Prostate gland (tissue), 2 donors: ENCODE measurements at regions of chr22 and their contacts with region 1.

Region 1: GRCh38 chr22:41403532-41404318 is 22.0 kb downstream of the TEF start:
- DNase-seq: peak; percentile 85
- H3K4me3 ChIP-seq: no peak overlapping the region
- H3K27ac ChIP-seq: no peak overlapping the region
- H3K4me1 ChIP-seq: peaks cover 4% of the 10 kb centered on the region
- H3K27me3 ChIP-seq: no peaks in the 10 kb centered on the region
- CTCF ChIP-seq: peak; percentile 93 to 98 (median 98)
- POLR2A ChIP-seq: no peak

Region 2: GRCh38 chr22:41468381-41469217 is 64.9 kb after region 1 on chr22 and contains the starts of genes ACO2 and PHF5A:
- intact Hi-C with region 1: loop called (anchors 10 kb)
- DNase-seq: peak; percentile 97
- H3K4me3 ChIP-seq: peak within 1 kb of the TSS; percentile 96 to 97
- H3K27ac ChIP-seq: peak within 1 kb of the TSS; percentile 87 to 93
- H3K4me1 ChIP-seq: peaks cover 9% of the 10 kb centered on the region
- H3K27me3 ChIP-seq: no peaks in the 10 kb centered on the region
- CTCF ChIP-seq: peak in 2 of 4 experiments; percentile 21 to 26
- POLR2A ChIP-seq: peak; percentile 69
- total RNA-seq, gene ACO2: 100 to 177 TPM
- total RNA-seq, gene PHF5A: 35.8 to 40.2 TPM

Region 3: DNA sequence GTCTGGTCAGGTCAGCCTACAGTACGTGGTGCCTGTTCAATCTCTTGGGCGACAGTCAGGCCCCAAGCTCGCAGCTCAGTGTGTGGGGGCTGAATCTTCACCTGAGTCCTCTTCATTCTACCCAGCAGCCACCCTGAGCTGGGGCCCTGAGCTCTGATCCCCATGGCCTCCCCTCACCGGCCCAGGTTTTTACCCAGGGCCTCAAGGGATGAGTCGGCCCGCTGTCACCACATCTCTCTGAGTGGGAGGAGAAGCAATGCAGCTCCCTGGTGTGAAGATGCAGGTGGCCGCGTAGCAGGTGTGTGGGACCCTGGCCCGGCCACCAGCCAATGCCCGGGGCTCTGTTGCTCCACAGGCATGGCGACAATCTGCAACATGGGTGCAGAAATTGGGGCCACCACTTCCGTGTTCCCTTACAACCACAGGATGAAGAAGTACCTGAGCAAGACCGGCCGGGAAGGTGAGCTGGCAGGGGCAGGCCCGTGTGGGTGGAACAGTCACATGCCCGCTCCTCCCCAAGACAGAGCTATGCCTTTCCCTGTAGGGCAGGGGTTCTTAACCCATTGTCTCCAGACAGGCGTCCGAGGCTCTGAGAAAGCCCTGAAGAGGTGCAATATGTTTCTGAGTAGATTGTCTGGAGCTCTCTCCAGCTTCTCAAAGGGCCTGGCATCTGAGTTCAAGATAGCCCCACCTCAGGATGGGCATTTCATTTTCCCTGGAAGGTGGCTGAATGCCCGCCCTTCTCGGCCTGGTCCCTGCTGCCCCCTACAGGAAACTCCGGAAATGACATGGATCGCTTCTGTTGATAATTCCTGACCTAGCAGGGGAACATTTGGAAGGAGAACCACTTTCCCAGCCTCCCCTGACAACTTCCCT is 113.7 kb after region 1 on chr22:
- intact Hi-C with region 1: loop called (anchors 2 kb)
- DNase-seq: peak; percentile 61
- H3K4me3 ChIP-seq: no peak overlapping the region
- H3K27ac ChIP-seq: no peak overlapping the region
- H3K4me1 ChIP-seq: peaks cover 4% of the 10 kb centered on the region
- H3K27me3 ChIP-seq: no peaks in the 10 kb centered on the region
- CTCF ChIP-seq: peak; percentile 86 to 95 (median 92)
- POLR2A ChIP-seq: no peak

Region 4: GRCh38 chr22:42134100-42135020 is 730.6 kb after region 1 on chr22:
- intact Hi-C with region 1: no loop called
- DNase-seq: no peak
- H3K4me3 ChIP-seq: no peak overlapping the region
- H3K27ac ChIP-seq: no peak overlapping the region
- H3K4me1 ChIP-seq: no peaks in the 10 kb centered on the region
- H3K27me3 ChIP-seq: no peaks in the 10 kb centered on the region
- CTCF ChIP-seq: no peak
- POLR2A ChIP-seq: no peak